ENCODE measurements at regions of chr1 and their contacts with region 1.

Region 1: DNA sequence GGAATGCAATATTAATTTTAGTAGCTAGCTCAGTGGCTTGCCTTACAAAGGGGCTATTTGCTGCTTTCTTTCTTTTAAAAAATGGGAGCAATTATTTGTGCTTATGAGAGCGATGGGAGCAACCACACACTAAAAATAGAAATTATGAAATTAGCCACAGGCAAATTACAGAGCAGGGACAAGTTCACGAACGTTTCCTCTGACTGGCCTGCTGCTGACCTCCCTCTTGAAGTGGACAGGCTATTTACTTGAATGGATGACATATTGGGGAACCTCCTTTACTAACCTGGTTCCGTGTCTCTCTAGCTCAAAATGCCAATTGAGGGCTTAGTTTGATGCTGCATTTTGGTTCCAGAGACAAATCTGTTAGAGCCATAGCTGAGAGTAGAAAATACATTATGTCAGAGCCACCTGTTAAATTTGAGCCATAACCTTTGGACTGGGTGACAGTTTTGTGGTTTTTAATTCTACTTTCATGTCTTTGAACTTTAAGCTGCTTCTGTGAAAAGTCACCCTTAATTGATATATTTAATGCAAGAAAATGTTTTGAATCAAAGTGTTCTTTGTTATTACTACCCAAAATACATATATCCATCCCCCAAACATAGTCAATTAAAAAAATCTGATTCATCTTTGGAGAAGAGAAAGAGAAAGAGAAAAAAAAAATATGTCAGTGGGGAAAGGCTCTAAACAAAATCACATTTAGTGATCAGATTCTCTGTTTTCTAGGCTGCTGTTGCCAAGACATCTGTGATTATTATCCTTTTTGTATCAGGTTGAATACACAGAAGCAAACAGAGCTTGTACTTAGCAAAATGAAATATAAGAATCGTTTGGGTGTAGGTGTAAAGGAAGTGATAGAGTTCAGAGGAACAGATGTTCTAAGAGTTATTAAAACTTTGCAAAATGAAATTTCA is 351.9 kb downstream of the ADGRL2 start:
- DNase-seq: no peak
- ATAC-seq: no peak
- H3K4me3 ChIP-seq: no peak overlapping the region
- H3K4me3 Mint-ChIP-seq: peak overlapping the region; percentile 49
- H3K27ac ChIP-seq: no peak overlapping the region
- H3K27ac Mint-ChIP-seq: no peak overlapping the region
- H3K4me1 ChIP-seq: no peaks in the 10 kb centered on the region
- H3K4me1 Mint-ChIP-seq: peaks cover 20 to 26% of the 10 kb centered on the region in 2 donors
- H3K27me3 ChIP-seq: no peaks in the 10 kb centered on the region
- H3K27me3 Mint-ChIP-seq: no peaks in the 10 kb centered on the region
- CTCF ChIP-seq: no peak

Region 2: GRCh38 chr1:82225421-82226185 is 73.0 kb after region 1 on chr1:
- intact Hi-C with region 1: loop called (anchors 10 kb)
- DNase-seq: no peak
- ATAC-seq: no peak
- H3K4me3 ChIP-seq: no peak overlapping the region
- H3K4me3 Mint-ChIP-seq: no peak overlapping the region
- H3K27ac ChIP-seq: no peak overlapping the region
- H3K27ac Mint-ChIP-seq: no peak overlapping the region
- H3K4me1 ChIP-seq: no peaks in the 10 kb centered on the region
- H3K4me1 Mint-ChIP-seq: peaks cover 0 to 11% of the 10 kb centered on the region in 2 donors
- H3K27me3 ChIP-seq: no peaks in the 10 kb centered on the region
- H3K27me3 Mint-ChIP-seq: no peaks in the 10 kb centered on the region
- CTCF ChIP-seq: no peak

Region 3: DNA sequence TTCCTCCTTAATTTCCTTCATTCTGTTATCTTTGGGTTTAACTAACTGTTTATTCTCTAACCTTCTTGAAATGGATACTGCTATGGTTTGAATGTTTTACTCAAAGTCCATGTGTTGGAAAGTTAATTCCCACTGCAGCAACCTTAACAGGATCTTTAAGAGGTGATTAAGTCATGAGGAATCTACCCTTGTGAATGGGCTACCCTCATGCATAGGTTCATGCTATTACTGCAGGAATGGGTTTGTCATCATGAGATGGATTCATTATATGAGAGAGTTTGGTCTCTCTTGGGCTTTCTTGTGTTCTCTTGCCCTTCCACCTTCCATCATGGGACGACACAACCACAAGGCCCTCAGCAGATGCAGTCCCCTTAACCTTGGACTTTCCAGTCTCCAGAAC is 165.1 kb after region 1 on chr1:
- intact Hi-C with region 1: no loop called
- DNase-seq: no peak
- ATAC-seq: no peak
- H3K4me3 ChIP-seq: no peak overlapping the region
- H3K4me3 Mint-ChIP-seq: no peak overlapping the region
- H3K27ac ChIP-seq: no peak overlapping the region
- H3K27ac Mint-ChIP-seq: no peak overlapping the region
- H3K4me1 ChIP-seq: no peaks in the 10 kb centered on the region
- H3K4me1 Mint-ChIP-seq: no peaks in the 10 kb centered on the region
- H3K27me3 ChIP-seq: no peaks in the 10 kb centered on the region
- H3K27me3 Mint-ChIP-seq: no peaks in the 10 kb centered on the region
- CTCF ChIP-seq: no peak